ENCODE measurements at regions of chr10 and their contacts with region 1.

Region 1: DNA sequence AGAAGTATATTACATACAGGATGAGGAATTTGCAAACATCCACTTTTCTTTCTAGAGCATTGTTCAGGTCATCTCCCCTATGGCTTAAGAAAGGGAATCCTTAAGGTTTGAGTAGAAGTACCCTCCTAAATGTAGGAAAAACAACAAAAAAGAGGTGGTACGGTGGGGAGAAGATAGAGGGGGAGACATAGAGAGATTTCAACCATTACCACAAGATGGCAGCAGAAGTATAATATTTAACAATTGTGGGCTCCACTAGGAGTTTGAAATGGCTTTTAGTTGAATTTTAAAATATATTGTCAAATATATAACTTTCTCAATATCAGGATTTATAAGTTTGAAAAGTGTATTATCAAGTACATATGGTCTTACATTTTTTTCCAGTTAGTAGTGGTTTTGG is 72.7 kb upstream of the PRKG1 start:
- DNase-seq: no peak
- ATAC-seq: peak; percentile 53

Region 2: DNA sequence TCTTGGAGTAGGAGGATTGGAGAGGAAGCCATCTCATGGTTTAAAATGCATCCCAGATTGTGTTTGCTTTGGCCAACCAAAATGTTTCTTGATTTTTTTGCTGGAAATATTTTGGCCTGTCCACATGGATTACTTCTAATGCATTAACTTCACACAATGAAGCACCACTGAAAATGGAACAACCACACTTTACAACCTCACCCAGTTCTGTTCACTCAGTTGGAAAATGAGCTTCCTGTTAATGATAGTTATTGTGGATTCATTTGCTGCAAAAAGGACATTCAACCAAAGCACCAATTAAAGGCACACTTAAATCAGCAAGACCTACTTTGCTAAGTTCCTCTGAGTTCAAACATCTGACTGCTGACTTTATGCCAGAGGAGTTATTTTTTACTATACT is 104.9 kb before region 1 on chr10:
- intact Hi-C with region 1: no loop called
- DNase-seq: no peak
- ATAC-seq: no peak

Region 3: GRCh38 chr10:51014680-51015389 is 13.2 kb after region 1 on chr10:
- intact Hi-C with region 1: no loop called
- DNase-seq: no peak
- ATAC-seq: no peak

Region 4: GRCh38 chr10:51047857-51048256 is 46.3 kb after region 1 on chr10:
- intact Hi-C with region 1: loop called (anchors 5 kb)
- DNase-seq: no peak
- ATAC-seq: no peak

Region 5: DNA sequence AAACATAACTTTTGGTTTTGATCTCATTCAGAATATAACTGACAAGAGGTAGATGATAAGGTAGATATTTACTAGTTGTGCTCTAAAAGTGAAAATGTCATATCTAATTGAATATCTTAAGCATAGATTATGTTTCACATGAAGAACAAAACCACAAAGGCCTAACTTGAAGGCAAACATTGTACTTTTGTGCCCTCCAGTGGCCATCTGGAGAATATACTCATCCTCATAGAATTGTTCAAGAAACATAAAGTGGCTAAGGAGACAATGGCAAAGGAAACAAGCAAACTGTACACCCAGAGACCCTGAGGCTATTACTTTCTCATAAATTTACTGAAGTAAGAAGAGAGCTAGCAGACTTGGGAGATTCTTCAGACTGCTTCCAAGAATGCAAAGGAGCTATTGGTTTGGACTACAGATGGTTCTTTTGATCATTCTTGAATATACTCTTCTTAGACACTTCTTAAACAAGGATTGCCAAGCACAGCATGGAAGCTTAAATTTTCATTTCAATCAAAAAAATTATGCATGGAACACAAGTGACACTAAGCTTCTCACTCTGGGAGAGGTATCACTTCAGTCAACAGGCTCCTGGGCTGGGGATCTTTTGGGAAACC is 1214.3 kb after region 1 on chr10:
- intact Hi-C with region 1: loop called (anchors 5 kb)
- DNase-seq: no peak
- ATAC-seq: peak; percentile 51

Region 6: GRCh38 chr10:52488606-52489485 is 1487.3 kb after region 1 on chr10:
- intact Hi-C with region 1: loop called (anchors 5 kb)
- DNase-seq: no peak
- ATAC-seq: no peak